ENCODE measurements at regions of chr2 and their contacts with region 1.

Region 1: GRCh38 chr2:219530048-219530963 is 13.3 kb downstream of the CHPF start:
- DNase-seq: peak; percentile 70 to 89 (median 83)
- ATAC-seq: peak; percentile 91
- H3K4me3 ChIP-seq: no peak overlapping the region
- H3K4me3 Mint-ChIP-seq: no peak overlapping the region
- H3K27ac ChIP-seq: no peak overlapping the region
- H3K27ac Mint-ChIP-seq: no peak overlapping the region
- H3K4me1 ChIP-seq: peaks cover 0 to 8% of the 10 kb centered on the region in 2 donors
- H3K4me1 Mint-ChIP-seq: peaks cover 0 to 7% (median 0%) of the 10 kb centered on the region in 7 donors
- H3K27me3 ChIP-seq: peaks cover 3 to 20% of the 10 kb centered on the region in 2 donors
- H3K27me3 Mint-ChIP-seq: peaks cover 53 to 65% (median 57%) of the 10 kb centered on the region in 5 donors

Region 2: GRCh38 chr2:219430633-219431615 is 99.4 kb before region 1 on chr2:
- CTCF ChIA-PET with region 1: interaction called, 19 read pairs
- POLR2A ChIA-PET with region 1: no interaction called
- intact Hi-C with region 1: loop called in 1 of 2 experiments (anchors 1 kb)
- DNase-seq: no peak
- ATAC-seq: no peak
- H3K4me3 ChIP-seq: no peak overlapping the region
- H3K4me3 Mint-ChIP-seq: no peak overlapping the region
- H3K27ac ChIP-seq: no peak overlapping the region
- H3K27ac Mint-ChIP-seq: no peak overlapping the region
- H3K4me1 ChIP-seq: no peaks in the 10 kb centered on the region
- H3K4me1 Mint-ChIP-seq: peaks cover 0 to 8% (median 0%) of the 10 kb centered on the region in 7 donors
- H3K27me3 ChIP-seq: no peaks in the 10 kb centered on the region
- H3K27me3 Mint-ChIP-seq: peaks cover 7 to 33% (median 15%) of the 10 kb centered on the region in 5 donors

Region 3: DNA sequence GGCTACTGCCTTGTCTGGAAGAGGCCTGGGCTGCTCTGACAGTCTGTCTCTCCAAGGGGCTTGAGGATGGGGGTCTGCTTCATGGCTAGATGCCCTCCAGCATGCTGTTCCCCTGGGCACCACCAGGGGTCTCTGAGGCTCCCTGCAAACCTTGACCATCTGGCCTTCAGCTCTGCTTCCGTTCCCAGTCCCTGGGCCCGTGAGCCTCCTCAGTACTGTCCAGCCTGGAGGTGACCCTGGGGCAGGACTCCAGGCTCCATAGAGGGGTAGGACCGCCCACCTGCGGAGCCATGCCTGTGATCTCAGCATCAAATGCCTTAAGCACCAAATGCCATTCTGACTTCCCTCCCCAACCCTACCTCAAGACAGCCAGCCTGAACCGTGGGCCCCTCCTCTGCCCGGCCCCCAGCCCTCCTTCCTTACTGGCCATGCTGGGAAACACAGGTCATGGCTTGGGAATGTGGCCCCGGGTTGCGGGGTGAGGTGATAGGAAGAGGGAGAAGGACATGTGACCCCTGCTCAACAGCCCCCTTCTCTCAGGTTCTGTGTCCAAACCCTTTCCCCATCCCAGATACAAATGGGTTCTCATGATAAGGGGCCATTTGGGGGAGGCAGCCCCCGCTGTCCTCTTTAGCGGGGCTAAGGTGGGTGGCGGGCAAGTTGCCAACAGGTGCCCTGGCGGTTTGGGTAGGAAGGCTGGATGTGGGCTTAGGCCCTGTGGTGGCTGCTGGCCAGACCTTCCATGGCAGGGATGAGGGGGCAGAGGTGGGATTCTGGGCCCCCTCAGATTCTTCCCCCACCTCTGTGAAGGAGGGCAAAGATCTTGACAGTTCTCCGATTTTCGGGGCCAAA is 70.6 kb before region 1 on chr2:
- CTCF ChIA-PET with region 1: interaction called, 10 read pairs
- POLR2A ChIA-PET with region 1: no interaction called
- intact Hi-C with region 1: loop called (anchors 1 kb)
- DNase-seq: peak in 3 of 9 donors; percentile 17 to 49 (median 36)
- ATAC-seq: peak; percentile 43
- H3K4me3 ChIP-seq: no peak overlapping the region
- H3K4me3 Mint-ChIP-seq: no peak overlapping the region
- H3K27ac ChIP-seq: no peak overlapping the region
- H3K27ac Mint-ChIP-seq: peak overlapping the region in 1 of 9 donors; percentile 21
- H3K4me1 ChIP-seq: no peaks in the 10 kb centered on the region
- H3K4me1 Mint-ChIP-seq: peaks cover 0 to 9% (median 2%) of the 10 kb centered on the region in 7 donors
- H3K27me3 ChIP-seq: no peaks in the 10 kb centered on the region
- H3K27me3 Mint-ChIP-seq: no peaks in the 10 kb centered on the region

Region 4: DNA sequence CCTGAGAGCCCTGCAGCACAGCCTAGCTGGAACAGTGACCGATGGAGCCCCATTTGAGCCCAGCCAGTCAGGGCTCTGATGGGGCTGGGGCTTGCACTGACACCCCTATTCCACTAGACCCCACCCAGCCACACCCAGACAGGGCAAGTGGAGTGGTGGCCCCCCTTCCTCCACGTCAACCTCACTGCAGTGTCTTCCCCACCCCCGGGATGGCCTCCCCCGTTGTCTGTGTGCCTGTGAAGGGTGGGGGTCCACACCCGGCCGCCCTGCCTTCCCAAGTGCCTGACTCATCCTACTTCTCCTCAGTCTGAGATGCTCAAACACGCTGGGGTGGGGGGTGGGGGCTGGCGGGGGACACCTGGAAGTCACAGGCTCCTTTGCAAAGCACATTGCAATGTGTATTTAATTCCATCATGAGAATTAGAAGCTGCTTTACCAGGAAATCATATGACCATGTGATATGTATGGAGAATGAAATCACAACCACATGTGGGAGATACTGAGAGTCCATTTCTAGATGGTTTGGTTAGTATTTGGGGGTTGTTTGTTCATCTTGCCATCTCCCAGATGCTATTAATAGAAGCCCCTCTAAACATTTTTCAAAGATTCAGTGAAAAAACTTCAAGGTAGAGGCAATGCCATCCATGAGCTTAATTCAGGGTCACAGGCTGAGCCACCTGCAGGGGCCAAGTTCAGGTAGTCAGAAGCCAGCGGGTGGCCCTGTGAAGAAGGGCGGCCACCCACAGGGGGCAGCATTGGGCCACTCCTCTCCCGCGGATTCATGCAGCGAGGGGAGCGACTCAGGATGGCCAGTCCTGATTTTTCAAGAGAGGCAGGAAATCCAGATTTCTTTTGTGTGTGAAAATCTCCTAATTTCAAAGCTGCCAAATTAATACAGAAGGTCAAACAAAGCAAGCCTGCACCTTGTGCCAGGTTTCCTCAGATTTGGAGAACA is 54.3 kb before region 1 on chr2:
- CTCF ChIA-PET with region 1: interaction called, 7 read pairs
- POLR2A ChIA-PET with region 1: no interaction called
- intact Hi-C with region 1: loop called (anchors 1 kb)
- DNase-seq: peak in 7 of 9 donors; percentile 31 to 67 (median 44)
- ATAC-seq: peak; percentile 77
- H3K4me3 ChIP-seq: no peak overlapping the region
- H3K4me3 Mint-ChIP-seq: no peak overlapping the region
- H3K27ac ChIP-seq: no peak overlapping the region
- H3K27ac Mint-ChIP-seq: no peak overlapping the region
- H3K4me1 ChIP-seq: no peaks in the 10 kb centered on the region
- H3K4me1 Mint-ChIP-seq: peaks cover 4 to 5% (median 4%) of the 10 kb centered on the region in 7 donors
- H3K27me3 ChIP-seq: no peaks in the 10 kb centered on the region
- H3K27me3 Mint-ChIP-seq: peaks cover 0 to 4% (median 0%) of the 10 kb centered on the region in 5 donors

Region 5: GRCh38 chr2:219509780-219510511 is 20.4 kb before region 1 on chr2:
- CTCF ChIA-PET with region 1: interaction called, 10 read pairs
- POLR2A ChIA-PET with region 1: no interaction called
- intact Hi-C with region 1: loop called (anchors 1 to 2 kb)
- DNase-seq: peak in 8 of 9 donors; percentile 28 to 55 (median 46)
- ATAC-seq: peak; percentile 84
- H3K4me3 ChIP-seq: no peak overlapping the region
- H3K4me3 Mint-ChIP-seq: peak overlapping the region; percentile 23 to 82 (median 67)
- H3K27ac ChIP-seq: no peak overlapping the region
- H3K27ac Mint-ChIP-seq: no peak overlapping the region
- H3K4me1 ChIP-seq: peaks cover 0 to 12% of the 10 kb centered on the region in 2 donors
- H3K4me1 Mint-ChIP-seq: peaks cover 14 to 30% (median 27%) of the 10 kb centered on the region in 7 donors
- H3K27me3 ChIP-seq: peaks cover 0 to 8% of the 10 kb centered on the region in 2 donors
- H3K27me3 Mint-ChIP-seq: peaks cover 40 to 55% (median 45%) of the 10 kb centered on the region in 5 donors

Measured in naive thymus-derived CD4-positive, alpha-beta T cell (primary cell).